Naive thymus-derived CD4-positive, alpha-beta T cell (primary cell): ENCODE measurements at regions of chr14 and their contacts with region 1.

Region 1: DNA sequence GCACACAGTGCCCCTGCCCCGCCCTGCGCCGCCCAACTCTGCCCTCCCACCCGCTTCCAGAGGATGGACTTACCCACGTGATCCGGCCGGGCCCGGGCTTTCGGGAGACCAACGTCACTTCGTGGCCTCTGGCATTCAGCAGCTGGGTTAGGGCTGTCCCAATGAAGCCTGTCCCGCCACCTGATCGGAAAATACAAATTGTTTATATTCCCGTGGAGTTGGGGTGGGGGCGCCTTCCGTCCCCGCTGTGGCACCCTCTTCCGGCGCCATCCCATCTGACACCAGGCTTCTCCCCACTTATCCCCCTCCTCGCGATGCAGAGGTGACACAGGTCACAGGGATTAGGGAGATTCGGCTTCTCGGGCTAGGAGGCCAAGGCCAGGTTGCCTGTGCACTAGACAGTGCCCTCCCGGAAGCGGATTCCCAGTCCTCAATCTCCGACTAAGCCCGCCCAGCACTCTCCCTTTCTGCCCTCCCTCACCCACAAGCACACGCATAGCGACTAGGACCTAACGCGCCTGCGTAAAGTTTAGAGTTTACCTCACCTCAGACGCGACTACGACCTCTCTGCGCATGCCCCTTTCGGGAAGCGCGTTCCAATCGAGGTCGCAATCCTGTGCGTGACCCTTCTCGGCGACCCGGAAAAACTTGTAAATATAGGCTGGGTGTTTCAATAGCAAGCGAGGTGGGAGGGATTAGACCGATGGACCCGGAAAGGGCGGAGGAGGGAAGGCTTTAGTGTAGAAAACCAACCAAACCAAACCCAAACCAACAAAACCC is at the start of gene SDR39U1:
- DNase-seq: peak; percentile 81 to 99 (median 98)
- ATAC-seq: peak; percentile 93
- H3K4me3 ChIP-seq: peak within 1 kb of the TSS; percentile 85
- H3K4me3 Mint-ChIP-seq: peak within 1 kb of the TSS; percentile 91 to 98 (median 95)
- H3K27ac ChIP-seq: peak within 1 kb of the TSS; percentile 98
- H3K27ac Mint-ChIP-seq: peak within 1 kb of the TSS; percentile 92 to 99 (median 98)
- H3K4me1 ChIP-seq: peaks cover 20 to 32% of the 10 kb centered on the region in 2 donors
- H3K4me1 Mint-ChIP-seq: peaks cover 27 to 57% (median 49%) of the 10 kb centered on the region in 7 donors
- H3K27me3 ChIP-seq: no peaks in the 10 kb centered on the region
- H3K27me3 Mint-ChIP-seq: peaks cover 0 to 3% (median 0%) of the 10 kb centered on the region in 5 donors
- total RNA-seq, gene SDR39U1: 64.7 to 137 (median 96.2) TPM

Region 2: DNA sequence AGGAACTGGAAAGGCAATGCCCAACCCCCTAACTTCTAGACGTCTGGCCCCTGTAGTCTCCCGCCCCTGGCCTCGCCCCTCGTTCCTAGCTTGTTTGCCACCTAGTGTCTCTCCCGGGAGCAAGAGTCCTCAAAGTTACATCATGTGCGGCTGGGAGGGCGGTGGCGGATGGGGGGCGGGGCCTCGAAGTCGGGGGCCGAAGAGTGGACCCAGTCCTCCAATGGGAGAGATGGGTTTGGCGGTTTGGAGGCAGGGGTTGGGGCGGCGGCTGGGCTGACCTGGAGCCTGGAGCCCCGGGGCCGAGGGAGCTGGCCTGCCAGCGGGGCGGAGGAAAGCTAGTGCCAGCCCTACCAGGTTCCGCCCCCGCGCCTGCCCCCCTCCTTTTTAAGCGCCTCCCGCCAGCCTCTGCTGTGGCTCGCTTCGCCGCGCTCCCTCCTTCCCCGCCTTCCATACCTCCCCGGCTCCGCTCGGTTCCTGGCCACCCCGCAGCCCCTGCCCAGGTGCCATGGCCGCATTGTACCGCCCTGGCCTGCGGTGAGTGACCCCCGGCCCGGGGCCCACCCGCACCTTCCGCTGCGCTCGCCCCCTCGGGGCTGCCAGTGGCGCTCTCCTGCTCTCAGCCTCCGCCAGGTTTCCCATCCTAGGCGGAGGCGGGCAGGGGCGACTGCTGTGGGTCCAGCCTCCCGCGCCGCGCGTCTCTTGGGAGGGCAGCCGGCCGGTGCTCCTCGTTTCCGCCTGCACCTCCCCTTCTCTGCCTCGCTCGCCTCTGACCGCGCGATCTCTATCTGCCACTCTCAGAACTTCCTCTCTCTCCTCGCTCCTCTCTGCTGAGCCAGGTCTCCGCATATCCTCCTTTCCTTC is 348.3 kb before region 1 on chr14 and contains the start of gene PCK2:
- CTCF ChIA-PET with region 1: no interaction called
- POLR2A ChIA-PET with region 1: interaction called, 6 read pairs
- intact Hi-C with region 1: loop called in 1 of 2 experiments (anchors 1 kb)
- DNase-seq: peak; percentile 44 to 80 (median 56)
- ATAC-seq: peak; percentile 81
- H3K4me3 ChIP-seq: peak within 1 kb of the TSS; percentile 91
- H3K4me3 Mint-ChIP-seq: peak within 1 kb of the TSS; percentile 91 to 100 (median 98)
- H3K27ac ChIP-seq: peak within 1 kb of the TSS; percentile 92
- H3K27ac Mint-ChIP-seq: peak within 1 kb of the TSS; percentile 90 to 97 (median 96)
- H3K4me1 ChIP-seq: peaks cover 6 to 16% of the 10 kb centered on the region in 2 donors
- H3K4me1 Mint-ChIP-seq: peaks cover 28 to 47% (median 41%) of the 10 kb centered on the region in 7 donors
- H3K27me3 ChIP-seq: no peaks in the 10 kb centered on the region
- H3K27me3 Mint-ChIP-seq: no peaks in the 10 kb centered on the region
- total RNA-seq, gene PCK2: 9.1 to 56.2 (median 14.4) TPM

Region 3: DNA sequence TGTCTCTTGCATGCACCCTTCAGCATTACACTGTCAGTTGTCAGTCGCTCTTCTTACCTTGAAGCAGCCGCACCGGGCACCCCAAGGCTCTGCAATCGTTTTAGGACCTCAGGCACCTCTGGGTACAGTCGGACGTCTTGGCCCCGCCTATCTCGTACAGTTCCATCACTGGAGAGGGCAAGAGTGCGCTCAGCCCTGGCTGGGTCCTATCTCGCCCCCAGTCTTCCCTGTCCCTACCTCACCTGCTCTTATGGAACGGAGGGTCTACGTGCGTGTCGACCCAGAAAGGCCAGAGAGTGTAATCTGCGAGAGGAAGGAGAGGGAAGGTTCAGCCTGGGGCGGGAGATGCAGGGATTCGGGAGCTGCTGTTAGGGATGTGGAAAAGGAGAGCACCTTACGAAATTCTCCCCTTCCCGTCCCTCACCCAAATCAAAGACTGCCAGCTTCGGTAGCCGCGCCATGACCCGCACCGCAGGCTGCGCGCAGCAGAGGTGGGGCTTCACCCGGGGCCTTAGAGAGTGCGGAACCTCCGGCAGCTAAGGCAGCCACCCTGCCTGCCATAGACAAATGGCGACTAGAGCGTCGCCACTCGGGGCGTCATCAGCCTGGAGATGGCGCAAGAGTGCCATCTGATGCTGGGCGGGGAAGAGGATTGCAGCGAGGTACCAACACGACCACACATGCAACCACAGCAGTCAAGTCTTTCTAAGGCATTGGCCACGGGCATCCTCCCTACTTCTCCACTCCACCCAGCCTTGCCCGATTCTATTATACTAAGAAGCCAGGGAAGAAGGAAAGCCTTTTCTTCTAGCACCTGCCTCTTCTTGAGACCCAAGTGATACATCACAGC is 226.7 kb before region 1 on chr14 and contains the start of gene MDP1:
- CTCF ChIA-PET with region 1: no interaction called
- POLR2A ChIA-PET with region 1: interaction called, 3 read pairs
- intact Hi-C with region 1: loop called (anchors 1 kb)
- DNase-seq: peak; percentile 75 to 89 (median 84)
- ATAC-seq: peak; percentile 85
- H3K4me3 ChIP-seq: peak within 1 kb of the TSS; percentile 95
- H3K4me3 Mint-ChIP-seq: peak within 1 kb of the TSS; percentile 89 to 97 (median 95)
- H3K27ac ChIP-seq: peak within 1 kb of the TSS; percentile 91
- H3K27ac Mint-ChIP-seq: peak within 1 kb of the TSS; percentile 80 to 99 (median 96)
- H3K4me1 ChIP-seq: peaks cover 31 to 36% of the 10 kb centered on the region in 2 donors
- H3K4me1 Mint-ChIP-seq: peaks cover 29 to 62% (median 54%) of the 10 kb centered on the region in 7 donors
- H3K27me3 ChIP-seq: no peaks in the 10 kb centered on the region
- H3K27me3 Mint-ChIP-seq: peaks cover 0 to 2% (median 0%) of the 10 kb centered on the region in 5 donors
- total RNA-seq, gene MDP1: 5.5 to 18.5 (median 14.2) TPM

Region 4: GRCh38 chr14:24271134-24271833 is 171.2 kb before region 1 on chr14 and contains the start of gene RABGGTA:
- CTCF ChIA-PET with region 1: no interaction called
- POLR2A ChIA-PET with region 1: interaction called, 3 read pairs
- intact Hi-C with region 1: loop called (anchors 1 kb)
- DNase-seq: peak; percentile 87 to 97 (median 96)
- ATAC-seq: peak; percentile 91
- H3K4me3 ChIP-seq: peak within 1 kb of the TSS; percentile 80
- H3K4me3 Mint-ChIP-seq: peak within 1 kb of the TSS; percentile 79 to 95 (median 92)
- H3K27ac ChIP-seq: peak within 1 kb of the TSS; percentile 98
- H3K27ac Mint-ChIP-seq: peak within 1 kb of the TSS; percentile 93 to 100 (median 98)
- H3K4me1 ChIP-seq: peaks cover 17 to 23% of the 10 kb centered on the region in 2 donors
- H3K4me1 Mint-ChIP-seq: peaks cover 30 to 52% (median 46%) of the 10 kb centered on the region in 7 donors
- H3K27me3 ChIP-seq: no peaks in the 10 kb centered on the region
- H3K27me3 Mint-ChIP-seq: no peaks in the 10 kb centered on the region
- total RNA-seq, gene RABGGTA: 49.7 to 76.5 (median 55.5) TPM

Region 5: DNA sequence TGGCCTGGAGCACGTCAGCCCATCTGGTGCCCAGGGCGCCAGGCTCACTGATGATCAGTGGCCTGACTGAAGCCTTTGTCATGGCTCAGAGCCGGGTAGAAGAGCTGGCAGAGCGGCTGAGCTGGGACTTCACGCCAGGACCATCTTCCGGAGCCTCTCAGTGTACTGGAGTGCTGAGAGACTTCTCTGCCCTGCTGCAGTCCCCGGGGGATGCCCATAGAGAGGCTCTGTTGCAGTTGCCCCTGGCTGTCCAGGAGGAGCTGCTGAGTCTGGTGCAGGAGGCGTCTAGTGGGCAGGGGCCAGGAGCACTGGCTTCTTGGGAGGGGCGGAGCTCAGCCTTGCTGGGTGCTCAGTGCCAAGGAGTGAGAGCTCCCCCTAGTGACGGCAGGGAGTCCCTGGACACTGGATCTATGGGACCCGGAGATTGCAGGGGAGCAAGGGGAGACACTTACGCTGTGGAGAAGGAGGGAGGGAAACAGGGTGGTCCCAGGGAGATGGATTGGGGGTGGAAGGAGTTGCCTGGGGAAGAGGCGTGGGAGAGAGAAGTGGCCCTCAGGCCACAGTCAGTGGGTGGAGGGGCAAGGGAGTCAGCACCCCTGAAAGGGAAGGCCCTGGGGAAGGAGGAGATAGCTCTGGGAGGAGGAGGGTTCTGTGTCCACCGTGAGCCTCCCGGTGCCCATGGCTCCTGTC is 10.7 kb before region 1 on chr14:
- CTCF ChIA-PET with region 1: interaction called, 7 read pairs
- POLR2A ChIA-PET with region 1: interaction called, 105 read pairs
- intact Hi-C with region 1: loop called (anchors 1 kb)
- DNase-seq: peak; percentile 76 to 91 (median 86)
- ATAC-seq: peak; percentile 77
- H3K4me3 ChIP-seq: peak overlapping the region; percentile 96
- H3K4me3 Mint-ChIP-seq: peak overlapping the region; percentile 82 to 96 (median 91)
- H3K27ac ChIP-seq: peak overlapping the region; percentile 99
- H3K27ac Mint-ChIP-seq: peak overlapping the region; percentile 51 to 97 (median 96)
- H3K4me1 ChIP-seq: peaks cover 24 to 41% of the 10 kb centered on the region in 2 donors
- H3K4me1 Mint-ChIP-seq: peaks cover 19 to 59% (median 53%) of the 10 kb centered on the region in 7 donors
- H3K27me3 ChIP-seq: no peaks in the 10 kb centered on the region
- H3K27me3 Mint-ChIP-seq: no peaks in the 10 kb centered on the region

Region 6: GRCh38 chr14:24513009-24513408 is 70.5 kb after region 1 on chr14:
- CTCF ChIA-PET with region 1: no interaction called
- POLR2A ChIA-PET with region 1: no interaction called
- intact Hi-C with region 1: no loop called
- DNase-seq: no peak
- ATAC-seq: no peak
- H3K4me3 ChIP-seq: no peak overlapping the region
- H3K4me3 Mint-ChIP-seq: no peak overlapping the region
- H3K27ac ChIP-seq: no peak overlapping the region
- H3K27ac Mint-ChIP-seq: peak overlapping the region in 1 of 9 donors; percentile 18
- H3K4me1 ChIP-seq: no peaks in the 10 kb centered on the region
- H3K4me1 Mint-ChIP-seq: peaks cover 0 to 8% (median 2%) of the 10 kb centered on the region in 7 donors
- H3K27me3 ChIP-seq: no peaks in the 10 kb centered on the region
- H3K27me3 Mint-ChIP-seq: peaks cover 8 to 23% (median 13%) of the 10 kb centered on the region in 5 donors

Region 7: DNA sequence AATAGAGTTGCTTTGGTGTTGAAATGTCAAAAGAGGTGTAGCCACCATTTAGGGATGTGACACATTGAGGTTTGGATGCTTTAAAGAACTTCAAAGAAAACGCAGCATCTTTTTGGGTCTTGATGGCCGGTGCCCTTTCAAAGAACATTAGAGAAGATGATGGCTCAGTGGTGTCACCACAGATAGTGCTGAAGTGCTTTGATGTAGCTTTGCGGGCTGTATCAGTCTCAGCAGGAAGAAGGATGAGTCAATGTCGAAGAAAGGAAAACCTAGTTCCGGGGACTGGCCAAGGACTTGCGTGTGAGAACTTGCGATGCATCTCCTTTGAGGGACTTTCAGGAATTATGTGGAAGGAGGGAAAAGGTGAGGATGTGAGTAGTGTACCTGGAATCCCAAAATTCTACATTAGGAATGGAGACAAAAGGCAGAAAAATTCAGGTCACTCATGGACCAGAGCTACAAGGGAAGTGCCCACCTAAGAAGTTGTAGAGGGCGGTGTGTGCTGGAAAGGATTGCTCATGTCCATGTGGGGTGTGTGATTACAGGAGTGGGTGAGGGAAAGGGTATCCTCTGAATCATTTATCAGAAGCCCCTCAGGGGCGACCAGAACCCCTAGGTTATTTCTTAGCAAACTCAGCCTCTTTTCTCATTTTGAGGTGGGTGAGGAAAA is 231.2 kb after region 1 on chr14:
- CTCF ChIA-PET with region 1: no interaction called
- POLR2A ChIA-PET with region 1: no interaction called
- intact Hi-C with region 1: loop called (anchors 2 to 5 kb)
- DNase-seq: peak in 8 of 9 donors; percentile 48 to 72 (median 60)
- ATAC-seq: peak; percentile 90
- H3K4me3 ChIP-seq: peak overlapping the region; percentile 49
- H3K4me3 Mint-ChIP-seq: peak overlapping the region; percentile 74 to 92 (median 86)
- H3K27ac ChIP-seq: peak overlapping the region; percentile 51
- H3K27ac Mint-ChIP-seq: peak overlapping the region; percentile 72 to 95 (median 89)
- H3K4me1 ChIP-seq: peaks cover 30 to 43% of the 10 kb centered on the region in 2 donors
- H3K4me1 Mint-ChIP-seq: peaks cover 36 to 81% (median 59%) of the 10 kb centered on the region in 7 donors
- H3K27me3 ChIP-seq: no peaks in the 10 kb centered on the region
- H3K27me3 Mint-ChIP-seq: no peaks in the 10 kb centered on the region